Posterior vena cava (tissue), 2 donors: ENCODE measurements at regions of chr14 and their contacts with region 1.

Region 1: GRCh38 chr14:32190672-32191071 is 11.2 kb upstream of the RNU6-7 start:
- DNase-seq: no peak

Region 2: GRCh38 chr14:32150392-32150791 is 40.3 kb before region 1 on chr14:
- intact Hi-C with region 1: loop called in 1 of 2 experiments (anchors 2 kb)
- DNase-seq: no peak

Region 3: DNA sequence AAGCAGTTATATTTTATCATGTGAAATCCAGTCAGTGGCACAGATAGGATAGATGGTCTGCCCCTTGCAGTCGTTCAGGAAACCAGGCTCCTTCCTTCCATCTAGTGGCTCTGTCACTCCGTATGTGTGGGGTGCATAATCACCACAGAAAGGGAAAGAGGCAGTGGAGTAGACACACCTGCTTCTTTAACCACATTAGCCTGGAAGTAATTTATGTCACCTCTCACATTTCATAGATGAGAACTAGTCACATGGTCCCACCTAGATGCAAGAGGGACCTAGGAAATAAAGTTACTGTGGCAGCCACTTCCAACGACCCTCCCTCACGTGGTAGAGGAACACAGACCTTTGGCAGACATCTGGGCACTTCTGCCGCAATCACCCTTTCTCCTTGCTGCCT is 26.6 kb after region 1 on chr14:
- intact Hi-C with region 1: loop called in 1 of 2 experiments (anchors 1 kb)
- DNase-seq: no peak